ENCODE measurements at regions of chr5 and their contacts with region 1.

Region 1: DNA sequence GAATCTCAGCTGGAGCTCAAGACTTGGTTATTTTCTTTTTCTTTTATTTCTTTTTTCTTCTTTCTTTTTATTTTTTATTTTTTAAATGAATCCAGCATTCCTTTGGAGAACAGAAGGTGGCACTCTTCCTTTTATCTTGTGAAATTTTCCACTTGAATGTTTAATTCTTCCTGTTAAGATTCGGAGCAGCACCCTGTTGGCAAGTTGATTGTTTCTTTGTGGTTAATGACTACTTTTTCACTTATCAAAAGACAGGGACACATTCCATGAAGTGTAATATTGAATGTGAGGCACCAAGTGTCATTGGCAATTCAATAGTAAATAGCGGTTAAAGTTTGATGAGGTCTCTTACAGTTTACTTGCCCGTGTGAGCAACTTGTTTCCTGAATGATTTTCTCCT is 240.5 kb upstream of the CHD1 start:
- DNase-seq: no peak
- H3K4me3 Mint-ChIP-seq: no peak overlapping the region
- H3K27ac Mint-ChIP-seq: no peak overlapping the region
- H3K4me1 Mint-ChIP-seq: peaks cover 9% of the 10 kb centered on the region
- H3K27me3 Mint-ChIP-seq: no peaks in the 10 kb centered on the region
- CTCF ChIP-seq: peak; percentile 16

Region 2: DNA sequence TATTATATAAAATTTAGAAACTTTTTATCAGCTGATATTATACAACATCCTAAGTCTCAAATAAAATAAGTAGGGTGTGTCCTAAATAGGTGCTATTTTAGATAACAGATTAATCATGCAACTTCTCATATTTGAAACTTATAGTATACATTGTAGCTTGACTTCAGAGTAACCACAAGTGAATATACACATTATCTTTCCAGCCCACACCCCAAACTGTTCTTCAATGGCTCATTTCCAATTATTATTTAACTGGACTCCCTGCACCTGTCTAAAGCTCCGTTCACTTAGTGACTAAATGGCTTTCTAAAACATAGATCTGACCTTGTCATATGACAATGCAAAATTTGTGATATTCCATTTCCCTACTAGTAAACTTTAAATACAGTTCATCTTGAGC is 886.8 kb before region 1 on chr5:
- CTCF ChIA-PET with region 1: no interaction called
- intact Hi-C with region 1: no loop called
- DNase-seq: no peak
- H3K4me3 Mint-ChIP-seq: no peak overlapping the region
- H3K27ac Mint-ChIP-seq: no peak overlapping the region
- H3K4me1 Mint-ChIP-seq: no peaks in the 10 kb centered on the region
- H3K27me3 Mint-ChIP-seq: no peaks in the 10 kb centered on the region
- CTCF ChIP-seq: no peak

Region 3: GRCh38 chr5:98839469-98840383 is 329.6 kb before region 1 on chr5:
- CTCF ChIA-PET with region 1: no interaction called
- intact Hi-C with region 1: no loop called
- DNase-seq: no peak
- H3K4me3 Mint-ChIP-seq: no peak overlapping the region
- H3K27ac Mint-ChIP-seq: no peak overlapping the region
- H3K4me1 Mint-ChIP-seq: no peaks in the 10 kb centered on the region
- H3K27me3 Mint-ChIP-seq: no peaks in the 10 kb centered on the region
- CTCF ChIP-seq: no peak

Region 4: DNA sequence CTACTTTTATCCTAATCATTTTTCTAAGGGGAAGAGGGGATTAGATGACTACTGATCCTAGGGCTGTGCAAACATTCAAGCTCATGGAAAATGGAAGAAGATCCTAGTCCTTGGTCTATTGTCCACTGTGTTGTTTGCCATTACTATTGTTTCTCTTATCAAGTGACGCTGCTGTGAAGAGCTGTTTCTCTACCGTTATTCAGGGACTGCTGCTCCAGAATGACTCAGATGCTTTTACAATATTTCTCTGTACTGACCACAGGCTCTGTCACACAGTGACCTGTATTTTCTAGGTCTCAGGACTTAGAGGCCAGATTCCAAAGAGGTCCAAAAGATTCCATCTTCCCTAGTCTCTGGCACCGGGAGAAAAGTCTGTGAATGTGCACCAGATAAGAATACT is 81.0 kb before region 1 on chr5:
- CTCF ChIA-PET with region 1: no interaction called
- intact Hi-C with region 1: no loop called
- DNase-seq: no peak
- H3K4me3 Mint-ChIP-seq: no peak overlapping the region
- H3K27ac Mint-ChIP-seq: no peak overlapping the region
- H3K4me1 Mint-ChIP-seq: no peaks in the 10 kb centered on the region
- H3K27me3 Mint-ChIP-seq: no peaks in the 10 kb centered on the region
- CTCF ChIP-seq: no peak

Region 5: DNA sequence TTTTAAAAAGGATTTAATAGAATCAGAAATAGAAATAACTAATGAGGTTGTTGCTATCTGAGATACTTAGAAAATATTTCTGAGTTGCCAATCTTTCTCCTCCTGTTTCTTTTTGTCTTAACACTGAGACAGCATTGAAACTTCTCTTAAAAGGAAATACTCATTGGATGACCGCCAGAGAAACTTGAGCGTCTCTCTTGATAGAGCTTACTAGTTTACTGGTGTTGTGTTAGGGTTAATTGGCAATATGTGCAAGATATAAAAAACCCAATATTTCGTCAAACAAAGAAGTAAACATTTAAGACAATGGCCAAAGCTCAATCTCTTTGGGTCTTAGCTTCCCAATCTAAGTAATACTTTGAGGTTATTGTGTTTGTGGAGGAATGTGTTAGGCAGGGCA is 64.1 kb before region 1 on chr5:
- CTCF ChIA-PET with region 1: no interaction called
- intact Hi-C with region 1: no loop called
- DNase-seq: no peak
- H3K4me3 Mint-ChIP-seq: no peak overlapping the region
- H3K27ac Mint-ChIP-seq: no peak overlapping the region
- H3K4me1 Mint-ChIP-seq: no peaks in the 10 kb centered on the region
- H3K27me3 Mint-ChIP-seq: no peaks in the 10 kb centered on the region
- CTCF ChIP-seq: no peak

Region 6: GRCh38 chr5:99320436-99320835 is 151.1 kb after region 1 on chr5:
- CTCF ChIA-PET with region 1: no interaction called
- intact Hi-C with region 1: loop called (anchors 1 kb)
- DNase-seq: peak; percentile 46
- H3K4me3 Mint-ChIP-seq: no peak overlapping the region
- H3K27ac Mint-ChIP-seq: no peak overlapping the region
- H3K4me1 Mint-ChIP-seq: no peaks in the 10 kb centered on the region
- H3K27me3 Mint-ChIP-seq: no peaks in the 10 kb centered on the region
- CTCF ChIP-seq: no peak

Region 7: GRCh38 chr5:100119903-100120302 is 950.6 kb after region 1 on chr5:
- CTCF ChIA-PET with region 1: no interaction called
- intact Hi-C with region 1: loop called (anchors 10 kb)
- DNase-seq: no peak
- H3K4me3 Mint-ChIP-seq: no peak overlapping the region
- H3K27ac Mint-ChIP-seq: no peak overlapping the region
- H3K4me1 Mint-ChIP-seq: no peaks in the 10 kb centered on the region
- H3K27me3 Mint-ChIP-seq: no peaks in the 10 kb centered on the region
- CTCF ChIP-seq: no peak

Region 8: DNA sequence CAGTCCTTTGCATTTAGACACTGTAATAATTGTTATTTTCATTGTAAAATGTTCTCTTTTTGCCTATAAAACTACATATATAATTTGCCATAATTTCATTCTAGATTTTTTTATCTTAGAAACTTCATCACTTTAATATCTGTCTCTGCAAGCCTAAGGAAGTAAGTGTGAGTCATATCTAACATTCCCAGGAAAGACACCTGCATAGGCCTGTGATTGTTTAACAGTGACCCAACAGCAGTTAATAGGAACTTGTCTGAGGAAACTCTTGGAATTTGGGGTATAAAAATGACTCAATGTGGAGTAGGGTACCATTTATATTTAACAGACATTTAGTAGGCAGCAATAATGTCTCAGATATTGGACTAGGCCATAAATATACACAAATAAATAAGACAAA is 1136.7 kb after region 1 on chr5:
- CTCF ChIA-PET with region 1: no interaction called
- intact Hi-C with region 1: loop called (anchors 5 kb)
- DNase-seq: no peak
- H3K4me3 Mint-ChIP-seq: no peak overlapping the region
- H3K27ac Mint-ChIP-seq: no peak overlapping the region
- H3K4me1 Mint-ChIP-seq: no peaks in the 10 kb centered on the region
- H3K27me3 Mint-ChIP-seq: no peaks in the 10 kb centered on the region
- CTCF ChIP-seq: no peak

Region 9: DNA sequence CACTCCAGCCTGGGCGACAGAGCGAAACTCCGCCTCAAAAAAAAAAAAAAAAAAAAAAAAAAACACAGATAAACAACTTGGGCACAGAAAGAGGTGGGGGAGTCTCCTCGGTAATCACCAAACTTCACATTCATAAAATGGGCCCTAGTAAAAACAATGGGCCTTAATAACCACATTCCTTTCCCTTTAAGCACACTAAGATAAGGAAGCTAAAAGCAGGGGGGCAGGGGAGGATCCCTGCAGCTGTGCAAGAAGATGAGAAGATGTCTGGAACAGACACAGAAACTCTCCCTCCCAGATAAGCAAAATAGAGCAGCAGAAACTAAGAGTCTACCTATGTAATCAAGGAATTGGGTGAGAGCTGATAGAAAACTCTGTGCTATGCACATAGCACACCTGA is 1254.7 kb after region 1 on chr5:
- CTCF ChIA-PET with region 1: no interaction called
- intact Hi-C with region 1: loop called (anchors 10 kb)
- DNase-seq: no peak
- H3K4me3 Mint-ChIP-seq: no peak overlapping the region
- H3K27ac Mint-ChIP-seq: no peak overlapping the region
- H3K4me1 Mint-ChIP-seq: no peaks in the 10 kb centered on the region
- H3K27me3 Mint-ChIP-seq: no peaks in the 10 kb centered on the region
- CTCF ChIP-seq: no peak